Ovary (tissue), 10 donors: ENCODE measurements at regions of chr3 and their contacts with region 1.

Region 1: DNA sequence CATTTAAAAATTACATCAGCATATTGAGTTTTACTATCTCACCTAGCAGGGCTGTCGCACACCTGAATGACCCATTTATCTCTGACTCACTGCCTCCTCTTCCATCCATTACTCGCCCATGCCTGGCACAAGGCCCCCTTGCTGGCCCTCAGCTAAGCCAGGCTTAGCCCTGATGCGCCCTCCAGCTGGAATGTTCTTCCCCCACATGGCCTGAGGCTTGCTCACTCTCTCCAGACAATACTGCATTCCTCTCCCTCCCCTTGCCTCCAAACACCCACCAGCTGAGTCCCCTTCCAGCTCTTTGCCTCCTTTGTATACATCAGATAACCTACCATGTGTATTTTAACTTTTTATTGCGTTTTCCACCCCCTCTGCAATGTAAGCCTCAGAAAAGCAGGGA is 7.1 kb downstream of the SH3BP5 start:
- DNase-seq: peak; percentile 38 to 69 (median 63)
- H3K4me3 ChIP-seq: no peak overlapping the region
- H3K27ac ChIP-seq: peak overlapping the region; percentile 43 to 75
- H3K4me1 ChIP-seq: peaks cover 45% of the 10 kb centered on the region
- H3K27me3 ChIP-seq: no peaks in the 10 kb centered on the region
- CTCF ChIP-seq: no peak
- EP300 ChIP-seq: no peak
- POLR2A ChIP-seq: no peak

Region 2: DNA sequence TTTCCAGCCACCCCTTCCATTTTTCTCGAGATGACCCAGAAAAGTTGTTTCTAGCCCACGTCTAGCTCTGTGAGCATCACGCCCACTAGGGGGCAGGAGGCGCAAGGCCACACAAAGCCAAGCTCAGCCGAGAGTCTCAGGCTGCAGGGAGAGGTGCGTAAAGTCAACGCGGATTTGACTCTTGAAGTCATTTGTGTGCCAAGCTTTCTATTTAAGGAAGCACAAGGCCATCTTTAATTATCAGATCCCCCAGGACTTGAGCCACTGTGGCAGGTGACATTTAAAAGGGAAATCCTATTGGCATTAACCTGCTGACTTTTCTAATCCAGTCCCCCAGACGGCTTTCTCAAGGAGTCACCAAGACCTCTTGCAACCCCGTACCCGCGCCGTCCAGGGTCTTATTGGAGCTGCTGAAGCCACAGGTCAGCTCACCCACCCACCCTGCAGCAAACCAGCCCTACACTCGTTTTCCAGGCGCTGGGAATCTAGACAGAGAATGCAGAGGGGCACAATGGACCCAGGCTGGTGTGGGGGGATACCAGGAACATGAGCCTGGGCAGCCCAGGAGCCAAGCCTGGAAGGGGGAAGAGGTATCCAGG is 57.1 kb before region 1 on chr3:
- intact Hi-C with region 1: no loop called
- DNase-seq: peak; percentile 82 to 91 (median 90)
- H3K4me3 ChIP-seq: no peak overlapping the region
- H3K27ac ChIP-seq: peak overlapping the region; percentile 25 to 53
- H3K4me1 ChIP-seq: peaks cover 15% of the 10 kb centered on the region
- H3K27me3 ChIP-seq: no peaks in the 10 kb centered on the region
- CTCF ChIP-seq: peak; percentile 84 to 95 (median 93)
- EP300 ChIP-seq: no peak
- POLR2A ChIP-seq: no peak

Region 3: DNA sequence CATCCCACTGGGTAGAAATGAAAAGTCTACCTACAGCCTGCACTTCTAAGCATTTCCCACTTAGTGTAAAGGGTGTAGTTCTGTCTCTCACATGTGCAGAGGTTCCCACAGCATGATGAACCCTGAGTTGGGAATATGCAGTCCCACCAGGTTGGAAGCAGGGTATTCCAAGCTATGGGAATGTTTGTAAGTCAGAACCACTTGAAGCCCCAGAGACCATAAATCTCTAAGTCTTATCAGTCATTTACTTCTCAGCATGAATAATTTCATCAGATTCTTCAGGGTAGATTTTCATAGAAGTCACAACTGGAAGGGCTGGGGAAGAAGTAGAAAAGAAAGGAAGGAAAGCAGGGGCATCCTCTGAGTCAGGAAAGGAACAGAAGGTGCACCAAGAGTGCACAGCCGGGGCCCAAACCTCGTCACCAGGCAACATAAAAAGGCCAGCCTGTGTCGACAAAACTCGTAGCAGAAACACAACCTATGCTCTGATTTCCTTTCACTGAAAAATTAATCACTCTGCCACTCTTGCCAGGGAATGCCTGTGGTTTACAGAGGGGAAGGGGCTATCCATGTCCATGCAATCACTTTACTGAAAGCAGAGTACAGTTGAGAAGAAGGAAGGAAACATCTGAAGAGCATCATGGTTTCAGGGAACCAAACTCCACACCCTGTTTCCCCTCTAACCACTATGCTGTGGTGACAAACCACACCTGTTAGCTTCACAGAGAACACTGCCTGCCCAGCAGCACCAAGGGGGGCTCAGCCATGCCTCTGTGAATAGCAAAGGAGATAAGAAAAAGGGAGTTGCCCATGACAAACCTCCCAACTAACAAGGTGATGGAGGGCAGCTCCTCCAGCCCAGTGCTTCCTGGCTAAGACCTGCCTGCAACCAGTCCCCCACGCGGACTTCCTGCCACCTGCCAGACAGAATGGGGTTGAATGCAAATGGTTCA is 33.4 kb before region 1 on chr3:
- intact Hi-C with region 1: loop called in 2 of 4 experiments (anchors 2 to 5 kb)
- DNase-seq: no peak
- H3K4me3 ChIP-seq: no peak overlapping the region
- H3K27ac ChIP-seq: peak overlapping the region; percentile 34 to 69
- H3K4me1 ChIP-seq: peaks cover 22% of the 10 kb centered on the region
- H3K27me3 ChIP-seq: no peaks in the 10 kb centered on the region
- CTCF ChIP-seq: no peak
- EP300 ChIP-seq: no peak
- POLR2A ChIP-seq: no peak

Region 4: DNA sequence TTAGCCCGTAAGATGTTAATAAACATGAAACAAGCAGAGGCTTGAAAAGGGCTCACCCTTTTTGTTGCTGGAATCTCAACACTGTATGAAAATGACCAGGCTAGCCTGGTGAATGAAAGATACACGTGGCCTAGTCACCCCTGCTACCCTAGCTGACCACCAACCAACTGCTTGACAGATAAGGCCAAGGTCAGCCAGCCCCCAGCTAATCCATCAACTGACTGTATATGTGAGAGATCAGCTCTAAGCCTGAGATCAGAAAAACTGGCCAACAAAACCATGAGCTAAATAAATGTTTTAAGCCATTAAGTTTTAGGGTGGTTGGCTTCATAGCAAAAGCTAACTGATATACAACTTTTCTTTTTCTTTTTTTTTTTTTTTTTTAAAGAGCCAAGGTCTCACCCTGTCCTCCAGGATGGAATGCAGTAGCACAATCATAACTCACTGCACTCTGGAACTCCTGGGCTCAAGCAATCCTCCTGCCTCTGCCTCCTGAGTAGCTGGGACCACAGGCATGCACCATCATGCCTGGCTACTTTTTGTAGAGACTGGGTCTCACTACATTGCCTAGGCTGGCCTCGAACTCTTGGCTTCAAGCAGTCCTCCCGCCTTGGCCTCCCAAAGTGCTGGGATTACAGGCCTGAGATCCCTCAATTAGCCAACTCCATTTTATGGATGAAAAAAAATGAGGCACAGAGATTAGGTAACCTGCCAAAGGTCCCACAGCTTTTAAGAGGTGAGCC is 27.5 kb before region 1 on chr3:
- intact Hi-C with region 1: loop called in 2 of 4 experiments (anchors 2 to 5 kb)
- DNase-seq: no peak
- H3K4me3 ChIP-seq: no peak overlapping the region
- H3K27ac ChIP-seq: peak overlapping the region; percentile 12 to 17
- H3K4me1 ChIP-seq: peaks cover 15% of the 10 kb centered on the region
- H3K27me3 ChIP-seq: no peaks in the 10 kb centered on the region
- CTCF ChIP-seq: no peak
- EP300 ChIP-seq: no peak
- POLR2A ChIP-seq: no peak